SK-N-SH (cell line): ENCODE measurements at regions of chr5 and their contacts with region 1.

Region 1: DNA sequence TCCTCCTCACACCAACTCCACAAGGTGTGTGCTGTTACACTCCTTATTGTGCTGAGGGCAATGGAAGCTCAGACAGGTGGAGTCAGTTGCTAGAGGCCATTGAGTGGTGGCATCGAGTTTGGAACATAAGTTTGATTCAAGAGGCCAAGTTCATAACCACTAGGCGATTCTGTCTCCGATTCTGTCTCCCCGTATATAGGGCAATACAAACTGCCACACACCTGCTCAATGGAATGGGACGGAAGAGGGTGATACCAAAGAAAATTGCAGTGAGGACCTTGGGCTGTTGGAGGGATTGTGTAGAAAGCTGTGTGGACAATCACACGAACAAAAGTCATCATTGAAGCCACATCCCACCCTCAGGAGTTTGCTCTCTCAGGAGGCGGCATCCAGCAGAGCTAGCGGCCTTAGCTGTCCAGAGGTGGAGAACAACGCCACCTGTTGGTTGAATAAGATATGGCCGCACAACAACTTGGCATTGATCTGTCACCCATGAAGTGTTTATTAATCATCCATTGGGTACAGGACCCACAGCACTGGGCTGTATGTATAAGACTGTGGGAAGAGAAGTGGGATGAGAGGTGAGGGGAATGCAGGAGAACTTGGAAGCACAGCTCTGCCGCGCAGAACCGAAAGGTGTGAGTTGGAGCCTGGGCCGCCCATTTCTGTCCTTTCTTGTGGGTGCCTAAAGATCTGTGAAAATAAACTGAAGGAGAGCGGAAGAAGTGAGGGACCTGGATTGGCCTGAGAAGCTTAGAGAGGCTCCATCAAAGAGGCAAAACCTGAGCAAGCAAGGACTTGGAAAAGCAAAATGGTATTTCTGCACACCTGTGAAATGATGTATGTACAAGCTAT is 16.1 kb upstream of the NEUROG1 start:
- DNase-seq: peak; percentile 79
- H3K4me3 ChIP-seq: no peak overlapping the region; a peak in 1 of 4 replicates
- H3K27ac ChIP-seq: no peak overlapping the region
- H3K4me1 ChIP-seq: no peaks in the 10 kb centered on the region
- H3K27me3 ChIP-seq: peaks cover 63% of the 10 kb centered on the region
- CTCF ChIP-seq: peak; percentile 90
- EP300 ChIP-seq: no peak
- RAD21 ChIP-seq: peak; percentile 86

Region 2: GRCh38 chr5:135271533-135272310 is 280.1 kb before region 1 on chr5:
- CTCF ChIA-PET with region 1: no interaction called
- POLR2A ChIA-PET with region 1: no interaction called
- DNase-seq: peak; percentile 27
- H3K4me3 ChIP-seq: no peak overlapping the region
- H3K27ac ChIP-seq: no peak overlapping the region
- H3K4me1 ChIP-seq: peaks cover 2 to 16% of the 10 kb centered on the region in 2 experiments; a peak in 3 of 4 replicates
- H3K27me3 ChIP-seq: no peaks in the 10 kb centered on the region
- CTCF ChIP-seq: no peak
- EP300 ChIP-seq: no peak
- RAD21 ChIP-seq: no peak

Region 3: DNA sequence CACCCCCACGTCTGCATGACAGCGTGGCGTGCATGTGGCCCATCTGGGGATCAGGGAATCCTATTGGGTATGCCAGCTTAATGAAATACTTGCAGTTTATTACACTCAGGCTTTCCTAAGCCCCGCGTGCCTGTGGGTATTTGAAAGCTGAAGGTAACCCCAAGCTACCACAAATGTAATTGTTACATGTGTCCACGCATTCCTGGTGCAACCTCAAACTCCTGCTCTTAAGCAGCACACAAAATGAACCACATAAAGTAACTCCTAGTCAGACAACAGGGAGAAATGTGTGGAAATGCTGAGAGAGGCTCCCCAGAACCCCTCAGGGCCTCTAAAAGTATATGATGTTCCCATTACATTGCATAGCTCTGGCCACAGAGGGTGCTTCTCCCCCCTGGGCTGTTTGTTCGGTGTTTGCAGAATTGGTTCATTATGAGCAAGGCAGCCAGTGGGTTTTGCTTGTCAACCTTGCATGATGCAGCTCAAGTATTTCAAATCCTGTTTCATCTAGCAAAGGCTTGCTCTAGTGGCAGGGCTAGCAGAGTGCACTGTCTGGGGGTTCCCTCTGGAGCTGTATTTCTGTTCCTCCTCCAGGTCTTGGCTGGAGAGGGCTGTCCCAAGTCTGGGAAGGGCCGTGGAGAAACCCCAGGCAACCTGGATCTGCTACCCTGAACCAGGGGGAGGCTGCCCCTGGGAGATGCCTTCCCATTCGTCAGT is 102.9 kb before region 1 on chr5:
- CTCF ChIA-PET with region 1: interaction called, 30 read pairs
- POLR2A ChIA-PET with region 1: no interaction called
- DNase-seq: no peak
- H3K4me3 ChIP-seq: no peak overlapping the region
- H3K27ac ChIP-seq: no peak overlapping the region
- H3K4me1 ChIP-seq: no peaks in the 10 kb centered on the region
- H3K27me3 ChIP-seq: peaks cover 27% of the 10 kb centered on the region
- CTCF ChIP-seq: no peak
- EP300 ChIP-seq: no peak
- RAD21 ChIP-seq: no peak

Region 4: DNA sequence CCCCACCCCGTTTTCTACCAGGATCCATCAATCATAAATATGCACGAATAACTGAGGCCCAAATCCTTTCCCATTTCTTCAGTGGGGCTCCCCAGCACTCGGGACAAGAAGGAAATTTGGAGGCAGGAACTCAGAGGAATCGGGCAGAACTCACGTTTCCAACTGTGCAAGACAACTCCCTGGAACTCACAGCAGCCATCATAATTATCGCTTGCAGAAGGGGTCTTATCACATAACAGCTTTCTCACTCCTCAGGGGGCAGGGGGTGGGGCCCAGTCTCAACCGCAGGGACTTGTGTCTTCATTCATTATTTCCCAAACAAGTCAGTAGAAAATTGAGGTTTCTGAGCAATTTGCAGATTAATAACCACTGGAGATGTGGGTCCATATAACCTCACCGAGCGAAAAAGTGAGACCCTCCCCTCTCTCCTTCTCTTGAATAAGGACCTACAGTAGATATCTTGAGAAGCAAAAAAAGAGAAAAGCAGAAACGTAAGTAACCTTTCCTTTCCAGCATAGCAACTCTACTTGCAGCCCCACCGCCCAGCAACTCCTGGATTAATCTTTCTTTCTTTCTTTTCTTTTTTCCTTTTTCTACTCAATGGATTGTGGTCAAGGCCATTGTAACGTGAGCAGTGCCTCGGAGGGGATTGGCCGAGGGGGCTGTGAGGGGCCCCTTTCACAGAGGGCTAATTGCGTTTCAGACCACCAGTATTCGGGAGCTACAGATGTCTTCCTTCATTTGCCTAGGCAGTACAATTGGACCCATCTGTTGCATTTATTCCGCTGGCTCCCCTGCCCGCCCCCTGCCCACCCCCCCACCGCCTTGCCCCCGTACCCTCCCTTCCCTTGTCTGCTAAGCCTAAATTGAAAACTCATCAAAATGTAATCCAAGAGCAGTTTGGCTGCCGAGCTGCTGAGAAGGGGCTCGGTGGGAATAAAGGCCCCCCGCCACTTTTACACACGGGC is 74.9 kb before region 1 on chr5:
- CTCF ChIA-PET with region 1: interaction called, 791 read pairs
- POLR2A ChIA-PET with region 1: interaction called, 3 read pairs
- DNase-seq: no peak
- H3K4me3 ChIP-seq: no peak overlapping the region
- H3K27ac ChIP-seq: no peak overlapping the region
- H3K4me1 ChIP-seq: no peaks in the 10 kb centered on the region; a peak in 1 of 4 replicates
- H3K27me3 ChIP-seq: peaks cover 17% of the 10 kb centered on the region
- CTCF ChIP-seq: no peak
- EP300 ChIP-seq: no peak
- RAD21 ChIP-seq: no peak

Region 5: DNA sequence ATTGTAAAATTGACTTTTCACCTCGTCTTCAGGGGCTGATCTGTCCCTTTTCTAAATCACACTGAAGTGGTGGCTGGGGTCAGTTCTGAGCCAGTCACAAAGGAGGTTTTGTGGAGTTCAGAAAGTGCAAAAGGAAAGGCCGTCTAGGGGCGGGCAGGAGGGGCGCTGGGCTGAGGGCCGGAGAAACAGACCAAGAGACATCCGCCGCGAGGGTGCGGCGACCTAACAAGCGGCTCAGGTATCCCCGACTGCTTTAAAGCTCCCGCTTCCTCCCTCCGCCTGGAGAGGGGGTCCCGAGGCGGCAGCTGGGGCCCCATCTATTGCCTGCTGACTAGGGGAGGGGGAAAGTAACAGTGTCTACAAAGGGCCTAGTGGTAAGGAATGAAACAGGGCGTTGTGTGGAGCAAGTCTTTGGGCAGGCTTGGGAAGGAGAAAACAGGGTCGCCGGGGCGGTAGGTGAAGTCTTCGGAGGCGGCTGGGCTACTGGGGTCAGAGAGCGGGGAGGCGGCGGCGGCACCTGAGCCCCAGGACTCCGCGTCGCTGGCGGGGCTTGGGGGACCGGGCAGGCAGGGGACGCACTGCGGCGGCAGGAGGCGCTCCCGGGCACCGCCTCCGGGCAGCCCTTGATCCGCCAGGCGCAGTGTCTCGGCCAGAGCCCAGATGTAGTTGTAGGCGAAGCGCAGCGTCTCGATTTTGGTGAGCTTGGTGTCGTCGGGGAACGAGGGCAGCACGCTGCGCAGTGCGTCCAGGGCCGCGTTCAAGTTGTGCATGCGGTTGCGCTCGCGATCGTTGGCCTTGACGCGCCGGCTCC is 17.0 kb before region 1 on chr5:
- CTCF ChIA-PET with region 1: interaction called, 40 read pairs
- POLR2A ChIA-PET with region 1: no interaction called
- DNase-seq: peak; percentile 52
- H3K4me3 ChIP-seq: no peak overlapping the region
- H3K27ac ChIP-seq: no peak overlapping the region
- H3K4me1 ChIP-seq: no peaks in the 10 kb centered on the region
- H3K27me3 ChIP-seq: peaks cover 89% of the 10 kb centered on the region
- CTCF ChIP-seq: no peak
- EP300 ChIP-seq: no peak
- RAD21 ChIP-seq: no peak

Region 6: DNA sequence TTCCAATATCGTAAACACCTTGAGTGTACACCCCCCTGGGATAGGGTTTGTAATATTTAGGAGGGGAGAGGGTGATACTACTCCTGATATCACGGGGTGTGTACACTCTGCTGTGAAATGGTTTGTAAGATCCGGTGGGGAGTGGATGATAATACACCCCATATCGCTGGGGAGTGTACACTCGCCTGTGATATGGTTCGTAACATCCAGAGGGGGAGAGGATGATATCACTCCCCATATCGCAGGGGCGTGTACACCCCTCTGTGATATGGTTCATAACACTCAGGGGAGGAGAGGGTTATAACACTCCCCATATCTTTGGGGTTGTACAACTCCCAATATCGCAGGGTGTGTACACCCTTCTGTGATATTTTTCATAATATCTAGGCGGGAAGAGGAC is 248.8 kb after region 1 on chr5:
- CTCF ChIA-PET with region 1: no interaction called
- POLR2A ChIA-PET with region 1: no interaction called
- DNase-seq: no peak
- H3K4me3 ChIP-seq: no peak overlapping the region
- H3K27ac ChIP-seq: no peak overlapping the region
- H3K4me1 ChIP-seq: no peaks in the 10 kb centered on the region
- H3K27me3 ChIP-seq: peaks cover 12% of the 10 kb centered on the region; the same call in 1 of the 2 replicates
- CTCF ChIP-seq: no peak
- EP300 ChIP-seq: no peak
- RAD21 ChIP-seq: no peak

Region 7: GRCh38 chr5:135834639-135835529 is 283.1 kb after region 1 on chr5 and contains the start of gene SLC25A48:
- CTCF ChIA-PET with region 1: interaction called, 113 read pairs
- POLR2A ChIA-PET with region 1: no interaction called
- DNase-seq: peak; percentile 80
- H3K4me3 ChIP-seq: peak within 1 kb of the TSS; percentile 37 to 61; a peak in 3 of 4 replicates
- H3K27ac ChIP-seq: no peak within 1 kb of the TSS
- H3K4me1 ChIP-seq: no peaks in the 10 kb centered on the region; a peak in 1 of 4 replicates
- H3K27me3 ChIP-seq: peaks cover 42% of the 10 kb centered on the region
- CTCF ChIP-seq: peak; percentile 69
- EP300 ChIP-seq: no peak
- RAD21 ChIP-seq: no peak
- polyA plus RNA-seq, gene SLC25A48: 0.18 and 0.23 TPM in 2 replicates